Ascending aorta (tissue), 2 donors: ENCODE measurements at regions of chr1 and their contacts with region 1.

Region 1: GRCh38 chr1:69058454-69058853 is 509.3 kb upstream of the LRRC7 start:
- DNase-seq: no peak
- H3K4me3 ChIP-seq: no peak overlapping the region
- H3K27ac ChIP-seq: no peak overlapping the region
- H3K4me1 ChIP-seq: no peaks in the 10 kb centered on the region
- H3K27me3 ChIP-seq: no peaks in the 10 kb centered on the region
- CTCF ChIP-seq: no peak

Region 2: GRCh38 chr1:69038379-69038778 is 20.1 kb before region 1 on chr1:
- intact Hi-C with region 1: no loop called
- DNase-seq: no peak
- H3K4me3 ChIP-seq: no peak overlapping the region
- H3K27ac ChIP-seq: no peak overlapping the region
- H3K4me1 ChIP-seq: no peaks in the 10 kb centered on the region
- H3K27me3 ChIP-seq: no peaks in the 10 kb centered on the region
- CTCF ChIP-seq: no peak

Region 3: DNA sequence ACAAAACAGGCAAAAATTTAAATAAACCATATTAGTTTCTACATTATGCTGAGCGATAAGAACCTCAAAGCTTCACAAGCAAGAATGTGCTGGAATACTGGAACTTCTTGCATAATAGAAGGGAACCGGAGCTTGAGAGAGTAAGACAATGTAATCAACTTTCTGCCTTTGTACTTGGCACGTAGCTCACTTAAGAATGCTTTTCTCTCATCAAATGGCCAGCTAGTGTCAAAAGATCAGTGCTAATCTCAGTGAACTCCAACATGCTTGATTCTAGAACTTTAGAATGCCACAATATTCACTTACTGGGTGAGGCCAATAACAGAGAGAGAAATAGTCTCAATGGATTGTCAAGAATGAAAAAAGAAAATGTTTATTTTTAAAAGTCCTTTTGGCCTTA is 23.2 kb after region 1 on chr1:
- intact Hi-C with region 1: loop called (anchors 2 kb)
- DNase-seq: no peak
- H3K4me3 ChIP-seq: no peak overlapping the region
- H3K27ac ChIP-seq: no peak overlapping the region
- H3K4me1 ChIP-seq: peaks cover 0 to 3% of the 10 kb centered on the region in 2 donors
- H3K27me3 ChIP-seq: no peaks in the 10 kb centered on the region
- CTCF ChIP-seq: no peak

Region 4: GRCh38 chr1:69213644-69214043 is 155.2 kb after region 1 on chr1:
- intact Hi-C with region 1: no loop called
- DNase-seq: no peak
- H3K4me3 ChIP-seq: no peak overlapping the region
- H3K27ac ChIP-seq: no peak overlapping the region
- H3K4me1 ChIP-seq: no peaks in the 10 kb centered on the region
- H3K27me3 ChIP-seq: no peaks in the 10 kb centered on the region
- CTCF ChIP-seq: no peak